ENCODE measurements at regions of chr6 and their contacts with region 1.

Region 1: DNA sequence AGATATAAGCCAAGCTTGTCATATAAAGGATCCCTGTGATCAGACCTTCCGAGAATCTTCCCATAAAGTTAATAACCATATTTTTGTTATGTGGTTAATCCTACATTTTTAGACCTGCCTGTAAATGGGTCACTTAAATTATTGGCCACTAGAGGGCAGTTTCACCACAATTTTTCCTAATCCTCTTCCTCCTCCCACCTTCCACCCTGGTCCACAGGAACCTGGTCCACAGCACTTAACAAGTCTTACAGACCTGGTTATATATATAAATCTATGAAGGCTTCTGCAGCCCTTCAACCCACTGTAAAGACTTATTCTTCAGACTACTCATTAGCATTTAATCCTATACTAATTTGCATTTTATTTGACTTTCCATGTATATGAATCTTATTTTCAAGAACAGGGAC is 28.3 kb downstream of the MRS2 start:
- DNase-seq: peak; percentile 22
- H3K4me3 Mint-ChIP-seq: no peak overlapping the region
- H3K27ac Mint-ChIP-seq: no peak overlapping the region
- H3K4me1 Mint-ChIP-seq: no peaks in the 10 kb centered on the region
- H3K27me3 Mint-ChIP-seq: no peaks in the 10 kb centered on the region

Region 2: DNA sequence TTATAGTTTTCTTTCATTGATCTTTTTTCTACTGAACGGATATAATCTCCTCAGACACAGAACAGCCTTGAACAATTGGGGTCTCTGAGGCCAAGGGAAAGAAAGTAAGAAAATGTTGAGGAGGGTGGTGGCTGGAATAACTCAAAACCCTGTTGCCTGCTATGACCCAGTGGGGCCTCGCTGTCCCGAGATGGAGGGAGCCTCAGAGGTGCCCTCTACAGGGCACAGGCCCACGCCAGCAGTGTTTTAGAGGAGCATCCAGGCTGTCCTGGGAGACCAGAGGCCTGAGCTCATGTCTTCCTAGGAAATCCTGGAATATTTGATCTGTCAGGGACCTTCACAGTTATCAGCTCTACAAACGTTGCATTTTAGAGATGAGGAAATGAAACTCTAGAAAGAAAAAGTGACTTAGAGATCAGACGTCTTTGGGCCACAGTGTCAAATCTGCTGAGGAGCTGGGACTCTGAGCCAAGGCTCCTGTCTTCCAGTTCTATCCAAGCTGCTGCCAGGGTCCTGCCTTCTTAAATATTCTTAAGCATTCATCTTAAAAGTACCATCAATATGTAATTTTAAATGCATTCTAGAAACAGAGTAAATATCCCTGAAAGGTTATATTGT is 90.0 kb after region 1 on chr6:
- CTCF ChIA-PET with region 1: interaction called, 24 read pairs
- POLR2A ChIA-PET with region 1: no interaction called
- intact Hi-C with region 1: loop called (anchors 1 kb)
- DNase-seq: peak; percentile 61
- H3K4me3 Mint-ChIP-seq: no peak overlapping the region
- H3K27ac Mint-ChIP-seq: no peak overlapping the region
- H3K4me1 Mint-ChIP-seq: no peaks in the 10 kb centered on the region
- H3K27me3 Mint-ChIP-seq: no peaks in the 10 kb centered on the region

Region 3: DNA sequence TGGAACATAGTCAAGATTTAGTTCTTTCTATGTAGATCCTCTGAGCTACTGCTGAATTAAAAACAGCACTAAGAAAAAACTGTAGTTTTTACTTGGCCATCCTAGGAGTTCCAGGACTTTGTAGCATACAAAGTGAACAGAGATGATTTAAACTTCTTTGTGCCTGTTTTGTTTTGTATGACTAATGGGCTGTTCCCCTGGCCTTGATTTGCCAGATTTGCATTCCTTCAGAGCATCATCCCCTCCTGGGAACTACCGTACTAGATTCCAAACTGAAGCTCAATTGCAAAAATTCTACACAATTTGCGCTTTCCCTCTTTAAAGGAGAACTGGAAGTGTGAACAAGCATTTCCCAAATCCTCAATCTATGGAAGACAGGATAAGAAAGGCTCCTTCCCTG is 258.9 kb after region 1 on chr6:
- CTCF ChIA-PET with region 1: interaction called, 3 read pairs
- POLR2A ChIA-PET with region 1: no interaction called
- intact Hi-C with region 1: loop called (anchors 2 kb)
- DNase-seq: no peak
- H3K4me3 Mint-ChIP-seq: no peak overlapping the region
- H3K27ac Mint-ChIP-seq: no peak overlapping the region
- H3K4me1 Mint-ChIP-seq: peaks cover 18% of the 10 kb centered on the region
- H3K27me3 Mint-ChIP-seq: no peaks in the 10 kb centered on the region

Region 4: GRCh38 chr6:24766680-24767462 is 335.8 kb after region 1 on chr6:
- CTCF ChIA-PET with region 1: interaction called, 6 read pairs
- POLR2A ChIA-PET with region 1: interaction called, 3 read pairs
- intact Hi-C with region 1: loop called (anchors 5 kb)
- DNase-seq: no peak
- H3K4me3 Mint-ChIP-seq: no peak overlapping the region
- H3K27ac Mint-ChIP-seq: no peak overlapping the region
- H3K4me1 Mint-ChIP-seq: peaks cover 4% of the 10 kb centered on the region
- H3K27me3 Mint-ChIP-seq: no peaks in the 10 kb centered on the region

Measured in activated CD4-positive, alpha-beta memory T cell treated with anti-CD3 and anti-CD28 coated beads for 36 hours (primary cell).